CD4-positive, alpha-beta T cell (primary cell): ENCODE measurements at regions of chr9 and their contacts with region 1.

Region 1: DNA sequence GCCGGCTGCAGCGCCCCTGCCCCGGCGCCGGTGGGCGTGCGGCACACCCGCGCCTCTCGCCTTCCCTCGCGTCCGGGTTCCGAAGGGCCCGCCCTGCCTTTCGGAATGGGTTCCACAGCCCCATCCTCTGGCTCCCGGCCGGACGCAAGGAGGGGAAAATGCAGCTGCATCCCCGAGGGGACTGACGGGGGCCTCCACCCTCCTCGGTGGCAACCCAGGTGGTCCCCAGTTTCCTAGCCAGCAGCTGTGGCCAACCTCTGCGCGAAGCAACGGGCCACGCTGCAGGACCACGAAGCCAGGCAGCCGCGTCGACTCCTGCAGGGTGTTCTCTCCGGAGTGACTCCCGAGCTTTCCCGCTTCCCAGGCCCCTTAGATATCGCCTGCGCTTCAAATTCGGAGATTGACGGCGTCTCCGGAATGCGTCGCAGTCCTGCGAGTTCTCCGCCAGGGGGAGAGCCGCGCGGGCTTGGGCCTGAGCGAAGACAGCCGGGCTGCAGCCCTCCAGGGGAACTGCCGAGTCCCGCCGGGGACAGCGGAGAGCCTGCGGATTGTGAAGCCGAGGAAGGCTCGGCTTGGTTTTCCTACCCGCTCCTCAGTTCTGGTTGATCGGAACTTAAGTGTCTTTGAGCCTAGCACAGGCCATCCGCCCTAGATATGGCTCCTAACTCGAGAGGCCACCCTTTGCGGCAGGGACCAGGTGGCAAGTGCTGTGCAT is 582 bp upstream of the APBA1 start:
- DNase-seq: peak; percentile 47 to 81 (median 61)
- ATAC-seq: peak; percentile 86
- H3K4me3 ChIP-seq: peak overlapping the region; percentile 74
- H3K4me3 Mint-ChIP-seq: peak overlapping the region; percentile 89
- H3K27ac ChIP-seq: no peak overlapping the region
- H3K27ac Mint-ChIP-seq: no peak overlapping the region
- H3K4me1 ChIP-seq: peaks cover 17% of the 10 kb centered on the region
- H3K4me1 Mint-ChIP-seq: peaks cover 20% of the 10 kb centered on the region
- H3K27me3 ChIP-seq: peaks cover 0 to 8% of the 10 kb centered on the region in 2 experiments
- H3K27me3 Mint-ChIP-seq: peaks cover 33% of the 10 kb centered on the region
- CTCF ChIP-seq: peak; percentile 81

Region 2: DNA sequence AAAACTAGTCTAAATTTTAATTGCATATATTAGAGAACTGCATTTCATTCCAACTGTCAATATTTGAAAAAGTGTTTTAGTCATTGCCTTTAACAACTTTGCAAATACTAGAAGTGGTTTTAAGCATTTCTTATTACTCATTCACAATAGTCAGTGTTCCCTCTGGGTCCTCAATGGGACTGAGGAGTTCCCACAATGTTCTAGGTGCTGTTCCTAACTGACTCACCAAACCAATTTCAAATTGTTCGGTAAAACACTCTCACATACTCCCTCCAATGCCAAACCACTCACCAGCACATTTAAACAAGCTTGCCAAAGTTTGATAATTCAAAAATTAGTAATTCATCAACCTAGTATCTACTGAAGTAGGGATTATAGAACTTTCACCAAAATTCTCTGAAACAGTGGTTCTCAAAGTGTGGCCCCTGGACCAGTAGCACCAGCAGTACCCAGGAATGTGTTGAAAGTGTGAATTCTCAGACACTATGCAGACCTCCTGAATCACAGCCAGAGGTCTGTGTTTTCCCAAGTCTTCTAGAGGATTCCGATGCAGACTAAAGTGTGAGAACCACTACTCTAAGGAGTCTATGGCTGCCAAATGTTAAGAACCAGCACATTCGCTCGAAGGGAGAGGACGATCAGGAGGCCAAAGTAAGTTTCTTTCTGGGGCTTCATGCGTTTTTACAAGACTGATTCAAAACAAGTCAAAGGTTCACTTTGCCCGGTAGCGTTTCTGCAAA is 73.4 kb before region 1 on chr9:
- CTCF ChIA-PET with region 1: no interaction called
- POLR2A ChIA-PET with region 1: no interaction called
- intact Hi-C with region 1: no loop called
- DNase-seq: no peak
- ATAC-seq: no peak
- H3K4me3 ChIP-seq: no peak overlapping the region
- H3K4me3 Mint-ChIP-seq: no peak overlapping the region
- H3K27ac ChIP-seq: no peak overlapping the region
- H3K27ac Mint-ChIP-seq: no peak overlapping the region
- H3K4me1 ChIP-seq: no peaks in the 10 kb centered on the region
- H3K4me1 Mint-ChIP-seq: no peaks in the 10 kb centered on the region
- H3K27me3 ChIP-seq: no peaks in the 10 kb centered on the region
- H3K27me3 Mint-ChIP-seq: peaks cover 8% of the 10 kb centered on the region
- CTCF ChIP-seq: no peak

Region 3: GRCh38 chr9:69683927-69684326 is 11.2 kb after region 1 on chr9:
- CTCF ChIA-PET with region 1: no interaction called
- POLR2A ChIA-PET with region 1: no interaction called
- intact Hi-C with region 1: no loop called
- DNase-seq: no peak
- ATAC-seq: no peak
- H3K4me3 ChIP-seq: no peak overlapping the region
- H3K4me3 Mint-ChIP-seq: no peak overlapping the region
- H3K27ac ChIP-seq: no peak overlapping the region
- H3K27ac Mint-ChIP-seq: no peak overlapping the region
- H3K4me1 ChIP-seq: no peaks in the 10 kb centered on the region
- H3K4me1 Mint-ChIP-seq: no peaks in the 10 kb centered on the region
- H3K27me3 ChIP-seq: no peaks in the 10 kb centered on the region
- H3K27me3 Mint-ChIP-seq: peaks cover 21% of the 10 kb centered on the region
- CTCF ChIP-seq: no peak

Region 4: DNA sequence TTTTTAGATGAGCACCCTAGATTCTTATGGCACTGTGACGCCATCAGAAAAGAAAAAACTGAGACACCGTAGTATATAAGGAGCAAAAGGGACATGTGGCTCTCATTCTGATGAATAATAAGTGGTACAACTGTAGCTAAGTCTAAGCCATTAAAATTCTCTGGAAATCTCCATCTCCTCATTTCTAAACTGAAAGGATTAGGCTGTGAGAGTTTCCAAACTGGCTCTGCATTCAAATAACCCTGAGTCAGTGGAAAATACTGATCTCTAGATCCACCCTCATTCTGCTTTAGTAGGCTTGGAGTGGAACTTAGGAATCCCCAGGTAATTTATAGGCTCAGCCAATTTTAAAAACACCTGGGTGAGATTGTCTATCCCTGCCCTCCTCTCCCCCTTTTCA is 58.6 kb after region 1 on chr9:
- CTCF ChIA-PET with region 1: no interaction called
- POLR2A ChIA-PET with region 1: no interaction called
- intact Hi-C with region 1: no loop called
- DNase-seq: no peak
- ATAC-seq: no peak
- H3K4me3 ChIP-seq: no peak overlapping the region
- H3K4me3 Mint-ChIP-seq: no peak overlapping the region
- H3K27ac ChIP-seq: no peak overlapping the region
- H3K27ac Mint-ChIP-seq: no peak overlapping the region
- H3K4me1 ChIP-seq: no peaks in the 10 kb centered on the region
- H3K4me1 Mint-ChIP-seq: no peaks in the 10 kb centered on the region
- H3K27me3 ChIP-seq: no peaks in the 10 kb centered on the region
- H3K27me3 Mint-ChIP-seq: no peaks in the 10 kb centered on the region
- CTCF ChIP-seq: no peak

Region 5: DNA sequence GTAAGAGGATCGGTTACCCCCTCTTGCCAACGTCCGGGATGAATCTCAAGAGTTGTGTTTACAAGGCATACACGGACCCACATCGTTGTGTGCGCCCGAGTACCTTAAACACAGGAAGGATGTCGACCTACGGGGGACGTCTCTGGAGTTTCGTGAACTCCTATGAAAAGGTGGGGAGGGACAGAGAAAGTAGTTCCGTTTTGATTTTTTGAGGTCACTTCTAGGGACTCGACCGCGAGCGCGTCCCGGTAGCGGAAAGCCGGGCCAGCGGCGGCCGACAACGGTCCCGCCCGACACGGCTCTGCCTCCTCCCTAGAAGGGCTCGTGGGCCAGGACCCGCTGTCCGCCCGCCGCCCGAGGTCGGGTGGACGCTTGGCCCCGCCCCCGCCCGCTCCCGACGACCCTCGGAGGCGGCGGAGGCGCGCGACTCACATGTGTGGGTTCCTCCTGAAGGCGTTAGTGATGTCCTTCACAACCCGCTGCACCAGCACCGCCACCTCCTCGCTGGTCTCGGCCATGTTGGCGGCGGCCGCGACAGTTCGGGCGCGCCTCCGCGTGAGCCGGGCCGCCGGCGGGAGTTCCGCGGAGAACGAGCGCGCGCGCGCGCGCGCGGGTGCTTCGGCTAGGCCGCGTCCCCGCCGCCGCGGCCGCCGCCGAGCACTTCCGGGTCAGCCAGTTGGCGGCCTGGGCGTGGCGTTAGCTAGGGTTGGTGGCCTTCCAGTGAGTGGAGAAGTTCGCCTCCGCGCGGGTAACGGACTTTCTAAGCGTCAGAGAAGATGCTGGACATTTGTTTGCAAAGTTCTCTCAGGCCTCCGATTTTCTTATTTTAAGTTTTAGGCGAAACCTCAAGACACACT is 86.9 kb after region 1 on chr9 and contains the start of gene PTAR1:
- CTCF ChIA-PET with region 1: interaction called, 4 read pairs
- POLR2A ChIA-PET with region 1: interaction called, 8 read pairs
- intact Hi-C with region 1: loop called (anchors 2 to 5 kb)
- DNase-seq: peak; percentile 78 to 96 (median 89)
- ATAC-seq: peak; percentile 82
- H3K4me3 ChIP-seq: peak within 1 kb of the TSS; percentile 87
- H3K4me3 Mint-ChIP-seq: peak within 1 kb of the TSS; percentile 98
- H3K27ac ChIP-seq: peak within 1 kb of the TSS; percentile 77 to 85
- H3K27ac Mint-ChIP-seq: peak within 1 kb of the TSS; percentile 93
- H3K4me1 ChIP-seq: peaks cover 9% of the 10 kb centered on the region
- H3K4me1 Mint-ChIP-seq: peaks cover 47% of the 10 kb centered on the region
- H3K27me3 ChIP-seq: no peaks in the 10 kb centered on the region
- H3K27me3 Mint-ChIP-seq: no peaks in the 10 kb centered on the region
- CTCF ChIP-seq: no peak
- total RNA-seq, gene PTAR1: 65.9 to 67.1 TPM

Region 6: GRCh38 chr9:69847491-69847890 is 174.7 kb after region 1 on chr9:
- CTCF ChIA-PET with region 1: no interaction called
- POLR2A ChIA-PET with region 1: no interaction called
- intact Hi-C with region 1: loop called in 1 of 2 experiments (anchors 10 kb)
- DNase-seq: no peak
- ATAC-seq: no peak
- H3K4me3 ChIP-seq: no peak overlapping the region
- H3K4me3 Mint-ChIP-seq: no peak overlapping the region
- H3K27ac ChIP-seq: no peak overlapping the region
- H3K27ac Mint-ChIP-seq: no peak overlapping the region
- H3K4me1 ChIP-seq: no peaks in the 10 kb centered on the region
- H3K4me1 Mint-ChIP-seq: no peaks in the 10 kb centered on the region
- H3K27me3 ChIP-seq: no peaks in the 10 kb centered on the region
- H3K27me3 Mint-ChIP-seq: peaks cover 14% of the 10 kb centered on the region
- CTCF ChIP-seq: no peak

Region 7: DNA sequence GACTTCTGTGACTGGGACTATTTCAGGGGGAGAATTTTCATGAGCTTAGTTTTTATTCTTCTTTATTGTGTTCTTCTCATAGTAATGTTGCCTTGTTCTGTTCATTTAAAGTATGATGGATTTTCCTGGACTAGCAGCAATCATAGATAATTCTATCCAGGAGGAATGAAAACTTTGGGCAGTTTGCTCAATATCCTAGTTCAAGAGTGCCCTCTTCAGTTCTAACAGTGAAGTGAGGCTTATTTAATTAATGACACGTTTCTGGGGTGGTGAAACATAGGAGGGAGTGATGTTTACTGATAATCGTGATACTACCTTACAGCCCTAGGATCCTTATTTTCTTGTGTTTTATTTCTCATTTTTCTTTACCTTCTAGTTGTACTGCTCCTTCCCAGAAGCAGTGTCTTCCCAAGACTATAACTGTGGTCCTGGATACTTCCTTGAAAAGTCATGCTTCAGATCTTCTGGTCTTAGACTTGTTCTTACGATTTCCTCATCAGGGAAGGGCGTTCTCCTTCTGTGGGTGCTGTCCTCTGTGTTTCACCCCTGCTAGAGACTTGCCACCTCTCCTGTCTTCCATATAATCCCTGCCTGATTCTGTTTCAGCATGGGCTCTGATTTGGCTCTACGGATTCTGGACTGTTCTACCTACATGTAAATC is 205.2 kb after region 1 on chr9:
- CTCF ChIA-PET with region 1: no interaction called
- POLR2A ChIA-PET with region 1: no interaction called
- intact Hi-C with region 1: loop called (anchors 1 to 5 kb)
- DNase-seq: peak in 3 of 14 experiments; percentile 9 to 39 (median 27)
- ATAC-seq: no peak
- H3K4me3 ChIP-seq: no peak overlapping the region
- H3K4me3 Mint-ChIP-seq: no peak overlapping the region
- H3K27ac ChIP-seq: no peak overlapping the region
- H3K27ac Mint-ChIP-seq: no peak overlapping the region
- H3K4me1 ChIP-seq: no peaks in the 10 kb centered on the region
- H3K4me1 Mint-ChIP-seq: no peaks in the 10 kb centered on the region
- H3K27me3 ChIP-seq: no peaks in the 10 kb centered on the region
- H3K27me3 Mint-ChIP-seq: peaks cover 9% of the 10 kb centered on the region
- CTCF ChIP-seq: peak; percentile 56

Region 8: DNA sequence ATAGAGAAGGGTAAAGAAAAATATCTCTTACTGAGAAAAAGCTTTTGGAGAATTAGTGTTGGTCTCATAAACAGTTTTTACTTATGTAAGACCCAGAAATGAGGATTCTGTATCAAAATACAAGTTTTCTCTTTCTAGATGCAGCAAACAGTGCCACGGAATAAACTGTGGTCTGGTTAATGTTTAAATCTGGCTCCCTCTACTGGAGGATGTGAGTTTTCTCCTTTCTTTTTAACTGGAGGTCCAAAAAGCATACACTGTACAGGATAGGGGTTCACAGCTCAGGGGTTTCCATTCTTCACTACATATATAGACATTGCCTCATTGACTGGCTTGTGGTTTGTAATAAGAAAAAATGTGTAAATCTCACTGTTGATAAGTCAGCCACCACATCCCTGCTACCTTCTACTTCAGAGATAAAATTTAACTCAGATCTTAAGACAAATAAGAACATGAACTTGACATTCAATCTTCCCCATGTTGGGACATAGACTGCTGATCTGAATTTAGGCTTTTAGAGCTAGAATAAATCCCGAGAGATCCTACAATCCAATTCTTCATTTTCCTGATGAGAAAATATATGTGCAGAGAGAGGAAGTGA is 246.8 kb after region 1 on chr9:
- CTCF ChIA-PET with region 1: no interaction called
- POLR2A ChIA-PET with region 1: no interaction called
- intact Hi-C with region 1: loop called (anchors 2 to 5 kb)
- DNase-seq: peak in 3 of 14 experiments; percentile 50 to 56 (median 51)
- ATAC-seq: peak; percentile 57
- H3K4me3 ChIP-seq: no peak overlapping the region
- H3K4me3 Mint-ChIP-seq: no peak overlapping the region
- H3K27ac ChIP-seq: no peak overlapping the region
- H3K27ac Mint-ChIP-seq: no peak overlapping the region
- H3K4me1 ChIP-seq: no peaks in the 10 kb centered on the region
- H3K4me1 Mint-ChIP-seq: no peaks in the 10 kb centered on the region
- H3K27me3 ChIP-seq: no peaks in the 10 kb centered on the region
- H3K27me3 Mint-ChIP-seq: peaks cover 6% of the 10 kb centered on the region
- CTCF ChIP-seq: peak; percentile 79

Region 9: GRCh38 chr9:70258692-70259511 is 586.1 kb after region 1 on chr9 and contains the start of gene SMC5:
- CTCF ChIA-PET with region 1: no interaction called
- POLR2A ChIA-PET with region 1: no interaction called
- intact Hi-C with region 1: loop called in 1 of 2 experiments (anchors 10 kb)
- DNase-seq: peak; percentile 79 to 97 (median 88)
- ATAC-seq: peak; percentile 81
- H3K4me3 ChIP-seq: peak within 1 kb of the TSS; percentile 89
- H3K4me3 Mint-ChIP-seq: peak within 1 kb of the TSS; percentile 93
- H3K27ac ChIP-seq: peak within 1 kb of the TSS; percentile 89 to 94
- H3K27ac Mint-ChIP-seq: peak within 1 kb of the TSS; percentile 96
- H3K4me1 ChIP-seq: peaks cover 44% of the 10 kb centered on the region
- H3K4me1 Mint-ChIP-seq: peaks cover 61% of the 10 kb centered on the region
- H3K27me3 ChIP-seq: no peaks in the 10 kb centered on the region
- H3K27me3 Mint-ChIP-seq: no peaks in the 10 kb centered on the region
- CTCF ChIP-seq: no peak
- total RNA-seq, gene SMC5: 37.7 to 38.1 TPM